CD8-positive, alpha-beta T cell (primary cell): ENCODE measurements at regions of chr16 and their contacts with region 1.

Region 1: GRCh38 chr16:28218104-28218503 is 6.3 kb upstream of the XPO6 start:
- DNase-seq: peak; percentile 40 to 89 (median 65)
- ATAC-seq: peak; percentile 100
- H3K4me3 ChIP-seq: no peak overlapping the region
- H3K4me3 Mint-ChIP-seq: no peak overlapping the region
- H3K27ac ChIP-seq: no peak overlapping the region
- H3K27ac Mint-ChIP-seq: peak overlapping the region; percentile 71
- H3K4me1 ChIP-seq: no peaks in the 10 kb centered on the region
- H3K4me1 Mint-ChIP-seq: peaks cover 5% of the 10 kb centered on the region
- H3K27me3 ChIP-seq: no peaks in the 10 kb centered on the region
- H3K27me3 Mint-ChIP-seq: no peaks in the 10 kb centered on the region
- CTCF ChIP-seq: peak; percentile 66

Region 2: GRCh38 chr16:28118636-28119035 is 99.5 kb before region 1 on chr16:
- CTCF ChIA-PET with region 1: interaction called, 13 read pairs
- POLR2A ChIA-PET with region 1: interaction called, 5 read pairs
- intact Hi-C with region 1: no loop called
- DNase-seq: no peak
- ATAC-seq: no peak
- H3K4me3 ChIP-seq: no peak overlapping the region
- H3K4me3 Mint-ChIP-seq: no peak overlapping the region
- H3K27ac ChIP-seq: no peak overlapping the region
- H3K27ac Mint-ChIP-seq: no peak overlapping the region
- H3K4me1 ChIP-seq: no peaks in the 10 kb centered on the region
- H3K4me1 Mint-ChIP-seq: peaks cover 6% of the 10 kb centered on the region
- H3K27me3 ChIP-seq: no peaks in the 10 kb centered on the region
- H3K27me3 Mint-ChIP-seq: no peaks in the 10 kb centered on the region
- CTCF ChIP-seq: no peak

Region 3: GRCh38 chr16:28193530-28194423 is 24.3 kb before region 1 on chr16:
- CTCF ChIA-PET with region 1: interaction called, 16 read pairs
- POLR2A ChIA-PET with region 1: interaction called, 4 read pairs
- intact Hi-C with region 1: no loop called
- DNase-seq: peak in 5 of 9 experiments; percentile 42 to 75 (median 57)
- ATAC-seq: no peak
- H3K4me3 ChIP-seq: peak overlapping the region; percentile 18 to 40
- H3K4me3 Mint-ChIP-seq: peak overlapping the region; percentile 81
- H3K27ac ChIP-seq: peak overlapping the region; percentile 61 to 86
- H3K27ac Mint-ChIP-seq: peak overlapping the region; percentile 98
- H3K4me1 ChIP-seq: peaks cover 80% of the 10 kb centered on the region
- H3K4me1 Mint-ChIP-seq: peaks cover 80% of the 10 kb centered on the region
- H3K27me3 ChIP-seq: no peaks in the 10 kb centered on the region
- H3K27me3 Mint-ChIP-seq: no peaks in the 10 kb centered on the region
- CTCF ChIP-seq: no peak

Region 4: GRCh38 chr16:29738514-29738913 is 1520.4 kb after region 1 on chr16:
- CTCF ChIA-PET with region 1: no interaction called
- POLR2A ChIA-PET with region 1: no interaction called
- intact Hi-C with region 1: no loop called
- DNase-seq: peak in 8 of 9 experiments; percentile 41 to 92 (median 65)
- ATAC-seq: peak; percentile 92
- H3K4me3 ChIP-seq: peak overlapping the region in 1 of 2 experiments; percentile 21
- H3K4me3 Mint-ChIP-seq: peak overlapping the region; percentile 53
- H3K27ac ChIP-seq: peak overlapping the region; percentile 36 to 67
- H3K27ac Mint-ChIP-seq: peak overlapping the region; percentile 87
- H3K4me1 ChIP-seq: peaks cover 74% of the 10 kb centered on the region
- H3K4me1 Mint-ChIP-seq: peaks cover 77% of the 10 kb centered on the region
- H3K27me3 ChIP-seq: no peaks in the 10 kb centered on the region
- H3K27me3 Mint-ChIP-seq: no peaks in the 10 kb centered on the region
- CTCF ChIP-seq: no peak